Dendritic cell treated with granulocyte-macrophage colony-stimulating factor and Interleukin-4, amounts not matched to agents 40 ng/mL and 50 ng/mL, for 4 days (primary cell): ENCODE measurements at regions of chr11 and their contacts with region 1.

Region 1: GRCh38 chr11:34926101-34926830 is 9.8 kb downstream of the PDHX start:
- H3K4me3 Mint-ChIP-seq: no peak overlapping the region
- H3K27ac Mint-ChIP-seq: no peak overlapping the region
- H3K4me1 Mint-ChIP-seq: peaks cover 33% of the 10 kb centered on the region
- H3K27me3 Mint-ChIP-seq: no peaks in the 10 kb centered on the region

Region 2: DNA sequence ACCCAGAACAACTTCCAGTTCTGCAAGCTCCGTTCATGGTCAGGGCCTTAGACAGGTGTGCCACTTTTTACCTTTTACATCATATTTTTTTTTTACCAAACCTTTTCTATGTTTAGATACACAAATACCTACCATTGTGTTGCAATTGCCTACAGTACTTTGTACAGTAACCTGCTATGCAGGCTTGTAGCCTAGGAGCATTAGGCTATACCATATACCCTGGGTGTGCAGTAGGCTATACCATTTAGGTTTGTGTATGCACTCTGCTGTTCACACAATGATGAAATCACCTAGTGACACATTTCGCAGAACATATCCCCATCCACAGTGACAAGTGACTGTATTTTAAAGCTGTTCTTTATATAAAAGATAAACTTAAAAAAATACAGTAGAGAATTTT is 39.7 kb before region 1 on chr11:
- intact Hi-C with region 1: no loop called
- H3K4me3 Mint-ChIP-seq: no peak overlapping the region
- H3K27ac Mint-ChIP-seq: no peak overlapping the region
- H3K4me1 Mint-ChIP-seq: no peaks in the 10 kb centered on the region
- H3K27me3 Mint-ChIP-seq: no peaks in the 10 kb centered on the region

Region 3: GRCh38 chr11:35165423-35166368 is 239.4 kb after region 1 on chr11:
- intact Hi-C with region 1: loop called (anchors 10 kb)
- H3K4me3 Mint-ChIP-seq: no peak overlapping the region
- H3K27ac Mint-ChIP-seq: peak overlapping the region; percentile 79
- H3K4me1 Mint-ChIP-seq: peaks cover 88% of the 10 kb centered on the region
- H3K27me3 Mint-ChIP-seq: no peaks in the 10 kb centered on the region

Region 4: DNA sequence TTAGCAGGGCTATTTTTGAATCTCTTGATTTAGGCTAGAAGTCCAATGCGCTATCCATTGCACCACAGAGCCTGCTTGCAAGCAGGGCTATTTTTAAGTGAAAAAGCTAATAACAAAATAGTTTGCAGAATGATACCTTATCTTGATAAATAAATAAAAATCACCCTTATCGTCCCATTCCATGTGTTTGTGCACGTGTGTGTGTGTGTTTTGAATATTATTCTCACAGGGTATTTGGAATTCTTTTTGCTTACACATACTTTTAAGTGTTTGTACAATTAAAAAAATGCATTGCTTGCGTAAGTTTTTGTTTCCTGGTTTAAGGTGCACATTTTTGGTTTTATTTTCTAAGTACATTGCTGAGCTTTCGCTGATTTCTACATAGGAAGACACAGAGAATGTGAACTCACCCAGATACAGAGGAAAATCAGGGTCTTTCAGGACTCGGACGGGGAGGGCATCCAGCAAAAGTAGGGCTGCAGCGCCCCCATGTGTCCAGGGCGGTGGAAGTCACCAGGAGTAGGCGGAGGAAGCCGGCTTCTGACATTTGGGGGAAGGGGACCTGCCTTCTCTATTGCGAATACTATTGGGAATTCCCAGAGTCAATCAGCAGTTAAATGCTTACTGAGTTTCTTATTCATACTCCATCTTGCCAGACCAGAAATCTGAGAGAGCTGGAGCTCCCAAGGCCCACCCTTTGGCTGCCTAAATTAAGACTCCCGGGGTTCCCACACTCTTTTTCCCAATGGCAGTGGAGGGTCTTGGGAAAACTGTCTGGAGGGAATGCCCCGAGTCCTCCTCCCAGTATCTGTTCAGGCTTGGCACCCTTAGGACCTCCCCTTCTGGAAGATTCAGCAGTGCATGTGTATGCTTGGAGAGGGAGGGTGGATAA is 465.9 kb after region 1 on chr11:
- intact Hi-C with region 1: loop called (anchors 1 kb)
- H3K4me3 Mint-ChIP-seq: peak overlapping the region; percentile 51
- H3K27ac Mint-ChIP-seq: peak overlapping the region; percentile 65
- H3K4me1 Mint-ChIP-seq: peaks cover 16% of the 10 kb centered on the region
- H3K27me3 Mint-ChIP-seq: peaks cover 1% of the 10 kb centered on the region

Region 5: DNA sequence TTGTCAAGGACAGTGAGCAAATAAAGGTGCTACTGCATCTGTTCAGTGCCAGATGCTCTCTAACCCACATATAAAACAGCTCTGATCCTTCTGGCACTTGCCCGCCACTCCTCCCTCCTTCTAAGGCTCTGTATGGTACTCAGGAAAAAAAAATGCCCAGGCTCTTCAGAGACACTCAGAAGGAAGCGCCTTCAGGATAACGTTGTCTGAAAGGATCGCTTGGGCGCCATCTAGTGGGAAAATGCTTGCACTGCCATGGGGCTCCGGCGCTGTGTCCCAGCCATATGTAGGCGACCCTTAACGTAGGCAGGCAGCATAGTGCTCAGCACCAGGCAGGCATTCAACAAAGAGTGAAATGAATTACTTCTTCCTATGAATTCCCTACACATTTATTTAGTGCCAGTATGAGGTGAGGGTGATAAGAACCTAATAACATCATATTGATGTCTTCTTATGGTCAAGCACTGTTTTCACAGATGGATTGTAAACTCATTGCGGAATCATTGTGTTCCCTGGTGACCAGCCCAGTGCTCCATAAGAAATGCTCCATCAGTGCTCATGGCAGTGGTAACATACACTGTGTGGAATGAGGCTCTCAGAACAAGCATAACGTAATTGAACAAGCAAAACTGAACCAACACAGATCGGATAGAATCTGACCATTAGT is 559.5 kb after region 1 on chr11:
- intact Hi-C with region 1: loop called (anchors 1 kb)
- H3K4me3 Mint-ChIP-seq: no peak overlapping the region
- H3K27ac Mint-ChIP-seq: no peak overlapping the region
- H3K4me1 Mint-ChIP-seq: no peaks in the 10 kb centered on the region
- H3K27me3 Mint-ChIP-seq: peaks cover 43% of the 10 kb centered on the region